ENCODE measurements at regions of chr4 and their contacts with region 1.

Region 1: DNA sequence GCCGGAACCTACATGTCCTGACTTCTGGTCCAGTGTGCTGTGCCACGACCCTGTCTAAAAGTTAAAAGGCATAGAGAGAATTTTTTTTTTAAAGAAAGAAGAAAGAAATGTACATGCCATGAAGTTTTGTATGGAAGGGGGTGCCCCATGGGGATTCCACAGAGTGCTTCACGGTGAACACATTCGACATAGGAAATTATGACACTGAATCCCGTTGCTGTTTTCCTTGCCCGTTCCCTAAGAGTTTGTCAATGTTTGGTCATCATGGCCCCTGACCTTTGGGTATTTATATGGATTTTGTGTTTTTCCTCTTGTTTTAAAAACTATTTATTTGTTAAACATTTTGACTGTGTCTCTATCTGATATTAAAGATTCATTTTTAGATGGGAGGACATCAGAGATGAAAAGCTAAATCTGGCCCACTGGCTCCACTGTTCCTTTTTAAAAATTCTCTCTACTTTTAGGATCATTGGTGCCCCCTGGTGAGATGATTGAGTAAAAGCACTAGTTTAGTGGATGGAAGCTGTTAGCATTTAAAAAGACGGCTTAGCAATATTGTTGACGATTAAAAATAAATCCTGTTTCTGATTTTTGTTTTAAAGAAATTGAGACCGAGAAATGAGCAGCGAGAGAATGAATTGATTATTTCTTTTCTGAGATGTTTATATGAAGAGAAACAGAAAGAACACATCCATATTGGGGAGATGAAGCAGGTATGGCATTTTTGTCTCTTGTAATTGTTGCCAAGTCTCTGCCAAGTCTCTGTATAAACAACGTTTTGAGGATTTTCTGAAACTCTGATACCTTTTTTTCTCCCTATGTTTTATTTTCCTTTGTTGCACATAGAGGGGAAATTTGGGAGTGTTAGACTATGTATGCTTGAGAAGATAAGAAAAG is 75.0 kb downstream of the PTTG2 start:
- DNase-seq: peak; percentile 66
- ATAC-seq: no peak
- H3K4me3 ChIP-seq: no peak overlapping the region
- H3K27ac ChIP-seq: no peak overlapping the region
- H3K4me1 ChIP-seq: peaks cover 21% of the 10 kb centered on the region
- H3K27me3 ChIP-seq: no peaks in the 10 kb centered on the region
- CTCF ChIP-seq: peak; percentile 59
- EP300 ChIP-seq: no peak
- POLR2A ChIP-seq: no peak
- RAD21 ChIP-seq: peak; percentile 54; the same call in 1 of the 2 replicates

Region 2: DNA sequence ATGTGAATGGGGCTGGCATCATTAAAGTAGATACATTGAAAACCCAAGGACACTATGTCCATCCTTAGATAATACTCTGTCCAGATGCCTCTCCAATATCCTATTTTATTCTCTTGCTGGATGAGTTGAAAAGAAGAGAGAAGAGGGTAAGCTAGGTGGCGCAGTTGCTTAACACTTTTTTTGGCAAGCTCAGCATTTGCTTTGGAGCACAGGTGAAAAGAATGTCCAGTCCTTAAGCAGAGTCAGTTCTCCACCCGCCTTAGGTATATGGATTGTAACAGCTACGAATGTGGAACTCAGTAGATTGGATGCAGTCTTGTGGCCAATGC is 582.3 kb before region 1 on chr4:
- CTCF ChIA-PET with region 1: no interaction called
- POLR2A ChIA-PET with region 1: no interaction called
- in situ Hi-C with region 1: no loop called
- intact Hi-C with region 1: loop called (anchors 5 kb)
- DNase-seq: peak; percentile 79
- ATAC-seq: peak; percentile 89
- H3K4me3 ChIP-seq: peak overlapping the region in 2 of 3 experiments; percentile 18 to 65; a peak in 1 of 6 replicates
- H3K27ac ChIP-seq: no peak overlapping the region
- H3K4me1 ChIP-seq: peaks cover 34% of the 10 kb centered on the region
- H3K27me3 ChIP-seq: peaks cover 0 to 26% of the 10 kb centered on the region in 2 experiments; a peak in 4 of 5 replicates
- CTCF ChIP-seq: peak; percentile 81
- EP300 ChIP-seq: no peak
- POLR2A ChIP-seq: no peak
- RAD21 ChIP-seq: no peak

Region 3: DNA sequence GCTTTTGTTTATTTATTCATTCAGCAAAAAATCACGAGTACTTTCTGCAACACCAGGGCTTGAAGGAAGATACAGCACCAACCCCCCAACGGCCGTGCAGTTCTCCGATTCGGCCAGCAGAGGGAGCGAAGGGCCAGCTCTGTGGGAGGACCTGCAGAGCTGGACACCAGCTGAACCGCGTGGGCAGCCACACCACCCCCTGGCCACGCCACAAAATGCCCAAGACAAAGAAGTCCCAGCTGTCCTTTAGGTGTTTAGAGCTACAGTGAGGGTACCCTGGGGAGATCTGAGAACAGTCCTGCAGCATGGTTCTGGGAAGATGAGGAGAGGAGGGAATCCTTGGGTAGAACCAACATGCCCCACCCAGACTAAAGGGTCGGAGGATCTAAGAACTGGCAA is 432.2 kb before region 1 on chr4:
- CTCF ChIA-PET with region 1: interaction called, 4 read pairs
- POLR2A ChIA-PET with region 1: no interaction called
- in situ Hi-C with region 1: no loop called
- intact Hi-C with region 1: loop called (anchors 5 kb)
- DNase-seq: peak; percentile 55
- ATAC-seq: peak; percentile 90
- H3K4me3 ChIP-seq: no peak overlapping the region
- H3K27ac ChIP-seq: no peak overlapping the region
- H3K4me1 ChIP-seq: peaks cover 47% of the 10 kb centered on the region
- H3K27me3 ChIP-seq: no peaks in the 10 kb centered on the region
- CTCF ChIP-seq: peak; percentile 97
- EP300 ChIP-seq: no peak
- POLR2A ChIP-seq: no peak
- RAD21 ChIP-seq: peak; percentile 95

Region 4: GRCh38 chr4:37826295-37827029 is 208.8 kb before region 1 on chr4 and contains the start of gene PGM2:
- CTCF ChIA-PET with region 1: no interaction called
- POLR2A ChIA-PET with region 1: no interaction called
- in situ Hi-C with region 1: no loop called
- intact Hi-C with region 1: loop called (anchors 1 kb)
- DNase-seq: peak; percentile 61
- ATAC-seq: peak; percentile 94
- H3K4me3 ChIP-seq: peak within 1 kb of the TSS; percentile 63 to 89 (median 71)
- H3K27ac ChIP-seq: peak within 1 kb of the TSS; percentile 39
- H3K4me1 ChIP-seq: peaks cover 31% of the 10 kb centered on the region
- H3K27me3 ChIP-seq: no peaks in the 10 kb centered on the region
- CTCF ChIP-seq: peak; percentile 34
- EP300 ChIP-seq: no peak
- POLR2A ChIP-seq: peak; percentile 75 to 95; a peak in 3 of 4 replicates
- RAD21 ChIP-seq: 0 out of 2 replicates have a peak, but pooled peaks have one; percentile 27
- total RNA-seq, gene PGM2: 36.9 and 64.5 TPM in 2 replicates

Region 5: GRCh38 chr4:37936889-37937498 is 98.2 kb before region 1 on chr4:
- CTCF ChIA-PET with region 1: no interaction called
- POLR2A ChIA-PET with region 1: no interaction called
- in situ Hi-C with region 1: no loop called
- intact Hi-C with region 1: loop called (anchors 2 kb)
- DNase-seq: no peak
- ATAC-seq: peak; percentile 40; the same call in 2 of the 3 replicates
- H3K4me3 ChIP-seq: no peak overlapping the region
- H3K27ac ChIP-seq: no peak overlapping the region
- H3K4me1 ChIP-seq: no peaks in the 10 kb centered on the region
- H3K27me3 ChIP-seq: no peaks in the 10 kb centered on the region; a peak in 1 of 5 replicates
- CTCF ChIP-seq: peak; percentile 61
- EP300 ChIP-seq: no peak
- POLR2A ChIP-seq: no peak
- RAD21 ChIP-seq: no peak

Region 6: GRCh38 chr4:37977471-37978247 is 57.6 kb before region 1 on chr4:
- CTCF ChIA-PET with region 1: no interaction called
- POLR2A ChIA-PET with region 1: no interaction called
- in situ Hi-C with region 1: no loop called
- intact Hi-C with region 1: loop called (anchors 2 kb)
- DNase-seq: peak; percentile 23
- ATAC-seq: peak; percentile 78
- H3K4me3 ChIP-seq: peak overlapping the region; percentile 61 to 81 (median 80); a peak in 5 of 6 replicates
- H3K27ac ChIP-seq: peak overlapping the region; percentile 67
- H3K4me1 ChIP-seq: peaks cover 54% of the 10 kb centered on the region
- H3K27me3 ChIP-seq: no peaks in the 10 kb centered on the region
- CTCF ChIP-seq: peak; percentile 70
- EP300 ChIP-seq: no peak
- POLR2A ChIP-seq: no peak
- RAD21 ChIP-seq: peak; percentile 56